H1 (cell line): ENCODE measurements at regions of chr5 and their contacts with region 1.

Region 1: DNA sequence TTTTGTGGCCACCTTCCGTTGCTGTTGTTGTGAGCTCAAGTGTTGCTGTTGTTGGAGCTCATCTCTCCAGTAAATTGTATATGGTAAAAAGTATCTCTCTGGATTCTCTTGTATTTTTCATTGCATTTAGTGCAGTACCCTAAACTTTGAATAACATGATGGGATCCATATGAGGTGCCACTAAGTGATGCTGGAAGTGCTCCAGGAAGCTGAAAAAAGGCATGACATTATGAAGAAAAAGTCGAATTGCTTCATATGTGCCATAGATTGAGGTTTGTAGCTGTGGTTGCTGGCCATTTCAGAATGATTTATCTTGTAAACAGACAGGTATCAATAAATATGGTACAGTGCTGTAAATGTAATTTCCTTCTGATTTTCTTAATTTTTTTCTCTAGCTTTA is 5.5 kb downstream of the MARCHF6 start:
- DNase-seq: no peak
- H3K4me3 ChIP-seq: no peak overlapping the region
- H3K27ac ChIP-seq: no peak overlapping the region
- H3K4me1 ChIP-seq: peaks cover 0 to 7% (median 0%) of the 10 kb centered on the region in 4 experiments; a peak in 3 of 7 replicates
- H3K27me3 ChIP-seq: no peaks in the 10 kb centered on the region
- CTCF ChIP-seq: no peak
- EP300 ChIP-seq: no peak
- POLR2A ChIP-seq: no peak
- RAD21 ChIP-seq: no peak

Region 2: DNA sequence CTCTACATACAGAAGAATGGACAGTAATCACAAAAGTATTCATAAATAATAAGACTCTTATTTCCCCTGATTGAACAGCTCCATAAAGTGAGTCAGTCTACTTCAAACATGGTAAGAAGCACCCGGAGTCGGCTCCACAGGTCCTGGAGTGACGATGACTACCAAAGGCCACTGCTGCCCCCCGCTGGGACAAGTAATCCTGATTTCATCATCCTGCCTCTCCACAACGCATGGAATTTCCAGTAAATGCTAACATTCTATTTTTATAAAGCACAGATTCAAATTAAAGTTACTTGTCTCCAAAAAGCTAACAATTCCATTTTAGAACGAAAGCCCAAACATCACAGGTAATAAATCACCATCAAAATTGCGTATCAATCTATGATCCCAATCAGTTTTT is 125.5 kb before region 1 on chr5:
- CTCF ChIA-PET with region 1: no interaction called
- POLR2A ChIA-PET with region 1: no interaction called
- DNase-seq: no peak
- H3K4me3 ChIP-seq: no peak overlapping the region
- H3K27ac ChIP-seq: no peak overlapping the region
- H3K4me1 ChIP-seq: no peaks in the 10 kb centered on the region
- H3K27me3 ChIP-seq: no peaks in the 10 kb centered on the region
- CTCF ChIP-seq: peak; percentile 7 to 18 (median 11); a peak in 3 of 4 replicates
- EP300 ChIP-seq: no peak
- POLR2A ChIP-seq: no peak
- RAD21 ChIP-seq: peak; percentile 54 to 58

Region 3: GRCh38 chr5:10374046-10375022 is 15.3 kb after region 1 on chr5:
- CTCF ChIA-PET with region 1: interaction called, 35 read pairs
- POLR2A ChIA-PET with region 1: interaction called, 7 read pairs
- DNase-seq: no peak
- H3K4me3 ChIP-seq: no peak overlapping the region
- H3K27ac ChIP-seq: no peak overlapping the region
- H3K4me1 ChIP-seq: peaks cover 3 to 5% (median 4%) of the 10 kb centered on the region in 4 experiments; a peak in 6 of 7 replicates
- H3K27me3 ChIP-seq: no peaks in the 10 kb centered on the region
- CTCF ChIP-seq: no peak
- EP300 ChIP-seq: no peak
- POLR2A ChIP-seq: no peak
- RAD21 ChIP-seq: no peak

Region 4: GRCh38 chr5:10424124-10424731 is 65.2 kb after region 1 on chr5:
- CTCF ChIA-PET with region 1: interaction called, 30 read pairs
- POLR2A ChIA-PET with region 1: interaction called, 3 read pairs
- DNase-seq: no peak
- H3K4me3 ChIP-seq: no peak overlapping the region
- H3K27ac ChIP-seq: no peak overlapping the region
- H3K4me1 ChIP-seq: peaks cover 0 to 2% (median 0%) of the 10 kb centered on the region in 4 experiments; a peak in 1 of 7 replicates
- H3K27me3 ChIP-seq: no peaks in the 10 kb centered on the region
- CTCF ChIP-seq: peak in 2 of 3 experiments; percentile 60 to 62; a peak in 3 of 4 replicates
- EP300 ChIP-seq: no peak
- POLR2A ChIP-seq: no peak
- RAD21 ChIP-seq: peak; percentile 65 to 70